OCI-LY7 (cell line): ENCODE measurements at regions of chr2 and their contacts with region 1.

Region 1: DNA sequence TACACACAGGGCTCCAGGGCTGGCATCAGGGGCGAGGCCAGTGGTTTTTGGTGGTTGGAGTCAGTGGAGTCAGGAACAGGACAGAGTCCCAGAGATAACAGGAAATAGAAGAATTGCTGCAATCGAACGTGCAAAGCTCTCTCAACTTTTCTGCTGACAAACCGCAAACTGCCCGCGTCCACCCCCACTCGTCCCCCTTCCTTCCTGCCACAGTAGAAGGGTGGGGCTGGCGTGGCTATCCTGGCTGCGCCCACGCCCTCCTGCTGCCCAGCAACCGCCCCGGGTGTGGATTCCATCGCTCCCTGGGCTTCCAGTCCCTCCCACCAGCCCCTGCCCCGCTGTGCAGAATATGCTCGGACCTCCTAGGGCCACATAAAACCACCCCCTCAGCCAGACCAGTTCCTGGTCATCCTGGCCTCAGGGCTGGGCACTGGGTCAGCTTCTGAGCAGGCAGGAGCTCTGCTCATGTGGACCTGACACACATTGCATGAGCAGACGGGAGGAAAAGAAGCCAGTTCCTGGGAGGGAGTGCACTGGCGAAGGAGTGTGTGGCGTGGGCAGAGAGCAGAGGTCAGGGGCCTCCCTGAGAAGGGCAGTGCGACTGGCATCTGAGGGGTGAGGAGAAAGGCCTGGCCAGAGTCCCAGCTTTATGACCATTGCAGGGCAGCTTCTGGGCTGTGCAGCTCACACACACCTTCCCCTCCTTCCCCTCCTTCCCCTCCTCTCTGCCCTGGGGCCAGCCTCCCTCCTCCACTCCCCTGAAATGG is 85.4 kb upstream of the ATG16L1 start:
- DNase-seq: no peak
- H3K4me3 ChIP-seq: no peak overlapping the region
- H3K27ac ChIP-seq: no peak overlapping the region
- H3K4me1 ChIP-seq: no peaks in the 10 kb centered on the region
- CTCF ChIP-seq: no peak

Region 2: GRCh38 chr2:233131936-233132720 is 34.0 kb before region 1 on chr2:
- CTCF ChIA-PET with region 1: no interaction called
- POLR2A ChIA-PET with region 1: interaction called, 13 read pairs
- intact Hi-C with region 1: no loop called
- DNase-seq: no peak
- H3K4me3 ChIP-seq: no peak overlapping the region
- H3K27ac ChIP-seq: no peak overlapping the region
- H3K4me1 ChIP-seq: no peaks in the 10 kb centered on the region
- CTCF ChIP-seq: no peak

Region 3: GRCh38 chr2:233193738-233194137 is 27.7 kb after region 1 on chr2:
- CTCF ChIA-PET with region 1: no interaction called
- POLR2A ChIA-PET with region 1: no interaction called
- intact Hi-C with region 1: no loop called
- DNase-seq: no peak
- H3K4me3 ChIP-seq: no peak overlapping the region
- H3K27ac ChIP-seq: no peak overlapping the region
- H3K4me1 ChIP-seq: no peaks in the 10 kb centered on the region
- CTCF ChIP-seq: no peak